ENCODE measurements at regions of chr11 and their contacts with region 1.

Region 1: GRCh38 chr11:61516675-61517572 is 8.4 kb downstream of the LRRC10B start:
- DNase-seq: peak; percentile 60
- ATAC-seq: peak; percentile 68
- H3K4me3 Mint-ChIP-seq: no peak overlapping the region
- H3K27ac Mint-ChIP-seq: no peak overlapping the region
- H3K4me1 Mint-ChIP-seq: peaks cover 9% of the 10 kb centered on the region
- H3K27me3 Mint-ChIP-seq: peaks cover 26% of the 10 kb centered on the region
- CTCF ChIP-seq: peak; percentile 64

Region 2: GRCh38 chr11:61315260-61315659 is 201.7 kb before region 1 on chr11:
- CTCF ChIA-PET with region 1: no interaction called
- POLR2A ChIA-PET with region 1: no interaction called
- intact Hi-C with region 1: no loop called
- DNase-seq: no peak
- ATAC-seq: no peak
- H3K4me3 Mint-ChIP-seq: no peak overlapping the region
- H3K27ac Mint-ChIP-seq: no peak overlapping the region
- H3K4me1 Mint-ChIP-seq: no peaks in the 10 kb centered on the region
- H3K27me3 Mint-ChIP-seq: no peaks in the 10 kb centered on the region
- CTCF ChIP-seq: no peak

Region 3: GRCh38 chr11:61350336-61350735 is 166.6 kb before region 1 on chr11:
- CTCF ChIA-PET with region 1: no interaction called
- POLR2A ChIA-PET with region 1: no interaction called
- intact Hi-C with region 1: no loop called
- DNase-seq: no peak
- ATAC-seq: no peak
- H3K4me3 Mint-ChIP-seq: no peak overlapping the region
- H3K27ac Mint-ChIP-seq: peak overlapping the region; percentile 56
- H3K4me1 Mint-ChIP-seq: peaks cover 51% of the 10 kb centered on the region
- H3K27me3 Mint-ChIP-seq: no peaks in the 10 kb centered on the region
- CTCF ChIP-seq: no peak

Region 4: GRCh38 chr11:61446211-61446651 is 70.7 kb before region 1 on chr11:
- CTCF ChIA-PET with region 1: interaction called, 16 read pairs
- POLR2A ChIA-PET with region 1: interaction called, 4 read pairs
- intact Hi-C with region 1: loop called (anchors 1 kb)
- DNase-seq: peak; percentile 27
- ATAC-seq: peak; percentile 82
- H3K4me3 Mint-ChIP-seq: no peak overlapping the region
- H3K27ac Mint-ChIP-seq: no peak overlapping the region
- H3K4me1 Mint-ChIP-seq: no peaks in the 10 kb centered on the region
- H3K27me3 Mint-ChIP-seq: no peaks in the 10 kb centered on the region
- CTCF ChIP-seq: no peak

Region 5: GRCh38 chr11:61477727-61478148 is 39.2 kb before region 1 on chr11:
- CTCF ChIA-PET with region 1: interaction called, 44 read pairs
- POLR2A ChIA-PET with region 1: no interaction called
- intact Hi-C with region 1: loop called (anchors 1 kb)
- DNase-seq: peak; percentile 61
- ATAC-seq: peak; percentile 56
- H3K4me3 Mint-ChIP-seq: no peak overlapping the region
- H3K27ac Mint-ChIP-seq: no peak overlapping the region
- H3K4me1 Mint-ChIP-seq: no peaks in the 10 kb centered on the region
- H3K27me3 Mint-ChIP-seq: peaks cover 2% of the 10 kb centered on the region
- CTCF ChIP-seq: peak; percentile 50

Region 6: GRCh38 chr11:62905927-62906531 is 1389.1 kb after region 1 on chr11:
- CTCF ChIA-PET with region 1: no interaction called
- POLR2A ChIA-PET with region 1: no interaction called
- intact Hi-C with region 1: no loop called
- DNase-seq: peak; percentile 63
- ATAC-seq: peak; percentile 69
- H3K4me3 Mint-ChIP-seq: no peak overlapping the region
- H3K27ac Mint-ChIP-seq: no peak overlapping the region
- H3K4me1 Mint-ChIP-seq: no peaks in the 10 kb centered on the region
- H3K27me3 Mint-ChIP-seq: peaks cover 25% of the 10 kb centered on the region
- CTCF ChIP-seq: peak; percentile 91

Measured in activated B cell treated with CpG ODN at 0.5 μM for 24 hours (primary cell).